ENCODE measurements at regions of chr19 and their contacts with region 1.

Region 1: DNA sequence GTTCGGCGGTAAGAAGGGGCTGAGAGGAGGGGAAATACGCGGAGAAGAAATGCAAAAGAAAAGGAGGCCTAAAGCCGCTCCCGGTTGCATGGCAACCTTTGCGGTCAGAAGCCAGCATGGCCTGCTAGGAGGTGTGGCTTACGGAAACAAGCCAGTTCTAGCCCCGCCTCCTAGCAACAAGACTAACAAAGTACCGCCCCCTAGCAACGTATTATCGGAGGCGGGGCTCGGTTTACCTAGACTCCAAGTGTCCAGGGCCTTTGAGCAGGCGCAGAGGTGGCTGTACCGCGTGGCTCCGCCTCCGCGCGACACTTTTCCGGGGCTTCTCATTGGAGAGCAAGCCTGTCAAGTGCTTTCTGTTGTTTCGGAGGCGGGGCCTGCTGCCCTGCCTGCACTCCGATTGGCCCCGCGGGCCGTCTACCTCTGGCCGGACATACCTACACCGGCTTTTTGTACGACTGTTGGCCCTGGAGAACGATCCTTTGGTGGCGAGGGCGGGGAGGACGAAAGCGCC is 337 bp upstream of the CYTH2 start:
- DNase-seq: peak; percentile 93 to 100 (median 100)
- ATAC-seq: peak; percentile 93
- H3K4me3 ChIP-seq: peak overlapping the region; percentile 93
- H3K4me3 Mint-ChIP-seq: peak overlapping the region; percentile 81 to 96 (median 92)
- H3K27ac ChIP-seq: peak overlapping the region; percentile 86
- H3K27ac Mint-ChIP-seq: peak overlapping the region; percentile 85 to 96 (median 90)
- H3K4me1 ChIP-seq: peaks cover 7 to 15% of the 10 kb centered on the region in 2 donors
- H3K4me1 Mint-ChIP-seq: peaks cover 0 to 30% (median 18%) of the 10 kb centered on the region in 7 donors
- H3K27me3 ChIP-seq: no peaks in the 10 kb centered on the region
- H3K27me3 Mint-ChIP-seq: no peaks in the 10 kb centered on the region

Region 2: GRCh38 chr19:48363810-48364563 is 104.8 kb before region 1 on chr19 and contains the starts of genes SYNGR4 and TMEM143:
- CTCF ChIA-PET with region 1: no interaction called
- POLR2A ChIA-PET with region 1: interaction called, 3 read pairs
- intact Hi-C with region 1: loop called in 1 of 2 experiments (anchors 1 kb)
- DNase-seq: peak; percentile 91 to 100 (median 99)
- ATAC-seq: peak; percentile 96
- H3K4me3 ChIP-seq: peak within 1 kb of the TSS; percentile 87
- H3K4me3 Mint-ChIP-seq: peak within 1 kb of the TSS; percentile 80 to 97 (median 92)
- H3K27ac ChIP-seq: peak within 1 kb of the TSS; percentile 86
- H3K27ac Mint-ChIP-seq: peak within 1 kb of the TSS; percentile 89 to 98 (median 95)
- H3K4me1 ChIP-seq: peaks cover 9 to 13% of the 10 kb centered on the region in 2 donors
- H3K4me1 Mint-ChIP-seq: peaks cover 0 to 28% (median 6%) of the 10 kb centered on the region in 7 donors
- H3K27me3 ChIP-seq: no peaks in the 10 kb centered on the region
- H3K27me3 Mint-ChIP-seq: peaks cover 0 to 3% (median 0%) of the 10 kb centered on the region in 5 donors
- total RNA-seq, gene SYNGR4: not detected
- total RNA-seq, gene TMEM143: 11.6 to 39.8 (median 20.1) TPM

Region 3: DNA sequence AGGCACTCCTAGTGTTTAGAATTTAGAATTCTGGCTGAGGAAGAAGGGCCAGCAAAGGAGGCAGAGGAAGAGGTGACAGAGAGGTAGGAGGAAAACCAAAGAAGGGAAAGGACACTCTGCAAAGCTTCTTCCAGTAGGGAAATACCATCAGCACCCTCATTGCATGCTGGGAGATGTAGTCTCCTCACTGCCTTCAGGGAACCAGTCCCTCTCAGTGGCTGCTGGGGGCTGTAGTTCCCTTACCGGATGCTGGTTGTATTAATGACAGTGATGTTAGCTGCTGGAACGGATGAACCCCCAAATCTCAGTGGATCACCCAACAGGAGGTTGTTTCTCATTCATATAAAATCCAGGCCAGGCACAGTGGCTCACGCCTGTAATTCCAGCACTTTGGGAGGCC is 65.2 kb before region 1 on chr19:
- CTCF ChIA-PET with region 1: no interaction called
- POLR2A ChIA-PET with region 1: no interaction called
- intact Hi-C with region 1: loop called (anchors 2 to 5 kb)
- DNase-seq: peak in 5 of 9 donors; percentile 35 to 52 (median 47)
- ATAC-seq: peak; percentile 69
- H3K4me3 ChIP-seq: no peak overlapping the region
- H3K4me3 Mint-ChIP-seq: no peak overlapping the region
- H3K27ac ChIP-seq: no peak overlapping the region
- H3K27ac Mint-ChIP-seq: peak overlapping the region in 1 of 9 donors; percentile 5
- H3K4me1 ChIP-seq: no peaks in the 10 kb centered on the region
- H3K4me1 Mint-ChIP-seq: peaks cover 5 to 22% (median 13%) of the 10 kb centered on the region in 7 donors
- H3K27me3 ChIP-seq: no peaks in the 10 kb centered on the region
- H3K27me3 Mint-ChIP-seq: peaks cover 5 to 12% (median 6%) of the 10 kb centered on the region in 5 donors

Region 4: GRCh38 chr19:48480558-48481500 is 12.0 kb after region 1 on chr19:
- CTCF ChIA-PET with region 1: no interaction called
- POLR2A ChIA-PET with region 1: interaction called, 15 read pairs
- intact Hi-C with region 1: loop called in 1 of 2 experiments (anchors 1 kb)
- DNase-seq: peak; percentile 50 to 69 (median 58)
- ATAC-seq: peak; percentile 82
- H3K4me3 ChIP-seq: peak overlapping the region; percentile 68
- H3K4me3 Mint-ChIP-seq: peak overlapping the region; percentile 81 to 90 (median 86)
- H3K27ac ChIP-seq: peak overlapping the region; percentile 79
- H3K27ac Mint-ChIP-seq: peak overlapping the region in 8 of 9 donors; percentile 79 to 93 (median 88)
- H3K4me1 ChIP-seq: peaks cover 3 to 9% of the 10 kb centered on the region in 2 donors
- H3K4me1 Mint-ChIP-seq: peaks cover 6 to 29% (median 22%) of the 10 kb centered on the region in 7 donors
- H3K27me3 ChIP-seq: no peaks in the 10 kb centered on the region
- H3K27me3 Mint-ChIP-seq: no peaks in the 10 kb centered on the region

Region 5: DNA sequence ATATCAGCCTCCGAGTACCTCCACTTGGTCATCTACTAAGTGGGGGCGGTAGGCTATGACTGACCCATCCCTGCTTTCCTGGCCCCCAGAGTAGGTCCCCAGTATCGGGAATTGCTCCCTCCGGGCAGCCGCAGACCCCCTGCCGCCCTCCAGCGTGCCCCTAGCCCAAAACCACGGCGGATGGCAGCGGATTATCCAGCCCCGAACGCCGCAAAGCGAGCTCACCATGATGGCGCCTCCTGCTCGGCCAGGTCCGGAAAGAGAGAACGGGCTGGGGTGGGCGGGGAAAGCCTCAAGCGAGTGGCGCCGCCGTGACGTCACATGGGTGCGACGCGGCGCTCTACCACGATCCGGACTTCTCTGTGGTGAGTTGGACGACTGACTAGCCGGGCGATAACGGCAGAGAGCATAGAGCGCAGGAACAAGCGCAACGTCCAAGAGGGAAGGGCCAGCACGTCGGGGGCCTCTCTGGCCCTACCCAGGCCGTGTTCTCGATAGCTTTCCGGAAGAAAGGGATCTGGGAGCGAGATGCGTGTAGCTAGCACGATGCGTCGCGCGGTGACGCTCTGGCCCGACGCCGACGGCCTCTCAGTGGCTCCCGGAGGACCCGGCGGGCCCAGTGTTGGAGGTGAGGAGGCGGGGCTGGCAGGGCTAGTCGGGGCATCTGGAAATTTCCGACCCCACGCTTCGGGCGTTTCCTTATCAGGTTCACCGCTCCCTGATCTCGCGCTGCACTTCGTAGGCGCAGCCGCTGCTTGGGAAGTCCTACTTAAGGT is 150.3 kb after region 1 on chr19 and contains the starts of genes RPL18 and SPHK2:
- CTCF ChIA-PET with region 1: no interaction called
- POLR2A ChIA-PET with region 1: interaction called, 3 read pairs
- intact Hi-C with region 1: loop called (anchors 1 kb)
- DNase-seq: peak; percentile 89 to 97 (median 95)
- ATAC-seq: peak; percentile 89
- H3K4me3 ChIP-seq: peak within 1 kb of the TSS; percentile 96
- H3K4me3 Mint-ChIP-seq: peak within 1 kb of the TSS; percentile 88 to 99 (median 96)
- H3K27ac ChIP-seq: peak within 1 kb of the TSS; percentile 95
- H3K27ac Mint-ChIP-seq: peak within 1 kb of the TSS; percentile 96 to 99 (median 98)
- H3K4me1 ChIP-seq: peaks cover 26 to 45% of the 10 kb centered on the region in 2 donors
- H3K4me1 Mint-ChIP-seq: peaks cover 40 to 64% (median 54%) of the 10 kb centered on the region in 7 donors
- H3K27me3 ChIP-seq: no peaks in the 10 kb centered on the region
- H3K27me3 Mint-ChIP-seq: no peaks in the 10 kb centered on the region
- total RNA-seq, gene RPL18: 1,570 to 2,826 (median 2,745) TPM
- total RNA-seq, gene SPHK2: 20.1 to 34.7 (median 30.5) TPM

Measured in naive thymus-derived CD4-positive, alpha-beta T cell (primary cell).